PC-9 (cell line): ENCODE measurements at regions of chr6 and their contacts with region 1.

Region 1: DNA sequence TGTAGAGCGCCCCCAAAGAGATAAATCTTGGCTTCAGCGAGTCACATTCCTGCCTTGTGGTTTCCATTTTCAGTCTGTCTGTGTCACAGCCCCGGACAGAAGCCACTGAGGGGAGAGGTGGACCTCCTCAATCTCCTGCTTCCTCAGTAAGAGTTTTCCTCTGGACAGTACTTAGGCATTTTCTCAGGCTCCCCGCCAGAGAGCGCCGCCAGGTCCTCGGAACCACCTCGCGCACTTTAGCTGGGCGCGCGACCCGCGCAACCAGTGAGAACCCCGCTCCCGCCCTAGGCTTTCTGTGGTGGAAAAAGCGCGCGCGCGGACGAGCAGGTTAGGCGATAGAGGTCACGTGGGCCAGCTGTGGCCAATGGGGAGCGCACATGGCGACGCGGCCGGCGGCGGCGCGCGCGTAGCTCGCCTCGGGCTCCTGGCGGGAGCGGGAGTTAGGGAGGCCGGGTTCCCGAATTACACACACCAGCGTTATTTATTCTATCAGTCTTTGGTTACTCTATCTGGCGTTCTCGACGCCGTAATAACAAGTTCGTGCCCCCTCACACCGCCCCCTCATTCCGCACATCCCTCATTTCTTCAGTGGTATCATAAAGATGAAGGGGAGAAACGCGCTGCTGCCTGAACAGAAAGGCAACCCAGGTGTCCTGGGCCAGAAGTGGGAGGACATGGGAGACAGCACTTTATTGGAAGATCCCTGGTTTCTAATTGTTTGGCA is 19.4 kb downstream of the PXT1 start:
- DNase-seq: peak; percentile 94 to 98
- H3K4me3 ChIP-seq: peak overlapping the region; percentile 75
- H3K27ac ChIP-seq: peak overlapping the region; percentile 81
- H3K4me1 ChIP-seq: peaks cover 45% of the 10 kb centered on the region
- H3K27me3 ChIP-seq: no peaks in the 10 kb centered on the region
- CTCF ChIP-seq: peak; percentile 65

Region 2: DNA sequence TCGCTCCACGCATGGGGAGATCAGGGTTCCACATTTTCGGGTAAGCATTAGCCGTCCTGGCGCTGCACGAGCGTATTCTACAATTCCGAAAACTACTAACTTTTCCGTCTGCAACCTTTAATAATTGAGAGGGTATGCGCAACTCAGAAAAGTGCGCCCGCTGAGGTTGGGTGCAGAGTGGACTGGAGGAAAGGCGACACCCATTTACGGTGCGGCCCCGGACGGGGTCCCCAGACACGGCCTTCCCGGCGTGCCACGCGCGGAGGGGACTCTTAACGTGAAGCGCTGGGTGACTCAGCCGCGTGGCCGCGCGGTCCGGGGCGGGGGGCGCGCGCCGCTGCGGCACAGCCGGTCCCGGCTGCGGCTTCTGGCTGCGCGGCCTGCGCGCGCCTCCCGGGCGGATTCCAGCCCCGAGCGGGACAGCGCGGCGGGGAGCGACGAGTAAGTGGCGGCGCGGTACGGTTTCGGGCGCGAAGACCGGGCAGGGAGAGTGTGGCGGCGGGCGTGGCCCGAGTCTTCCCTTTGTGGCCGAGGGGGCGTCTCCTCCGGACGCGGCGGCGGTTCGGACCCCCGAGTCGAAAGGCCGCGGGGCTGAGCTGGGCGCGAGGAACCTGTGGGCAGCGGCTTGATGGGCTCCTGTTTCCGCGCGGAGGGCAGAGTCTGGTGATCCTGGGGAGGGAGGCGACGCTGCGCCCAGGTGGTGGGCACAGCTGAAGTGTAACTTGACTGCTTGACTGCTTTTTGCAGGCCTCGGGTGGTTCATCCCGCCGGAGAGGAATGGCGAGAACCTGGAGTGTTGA is 19.6 kb after region 1 on chr6 and contains the starts of genes KCTD20 and PXT1:
- CTCF ChIA-PET with region 1: no interaction called
- POLR2A ChIA-PET with region 1: interaction called, 8 read pairs
- intact Hi-C with region 1: loop called (anchors 1 kb)
- DNase-seq: peak; percentile 67 to 88
- H3K4me3 ChIP-seq: peak within 1 kb of the TSS; percentile 75
- H3K27ac ChIP-seq: peak within 1 kb of the TSS; percentile 92
- H3K4me1 ChIP-seq: peaks cover 25% of the 10 kb centered on the region
- H3K27me3 ChIP-seq: no peaks in the 10 kb centered on the region
- CTCF ChIP-seq: no peak
- total RNA-seq, gene KCTD20: 34.2 and 42.5 TPM in 2 replicates
- total RNA-seq, gene PXT1: not detected in 2 replicates

Region 3: GRCh38 chr6:36493859-36494258 is 70.6 kb after region 1 on chr6:
- CTCF ChIA-PET with region 1: no interaction called
- POLR2A ChIA-PET with region 1: no interaction called
- intact Hi-C with region 1: loop called (anchors 5 kb)
- DNase-seq: peak in 1 of 2 experiments; percentile 83
- H3K4me3 ChIP-seq: no peak overlapping the region
- H3K27ac ChIP-seq: peak overlapping the region; percentile 20
- H3K4me1 ChIP-seq: peaks cover 18% of the 10 kb centered on the region
- H3K27me3 ChIP-seq: no peaks in the 10 kb centered on the region
- CTCF ChIP-seq: no peak

Region 4: DNA sequence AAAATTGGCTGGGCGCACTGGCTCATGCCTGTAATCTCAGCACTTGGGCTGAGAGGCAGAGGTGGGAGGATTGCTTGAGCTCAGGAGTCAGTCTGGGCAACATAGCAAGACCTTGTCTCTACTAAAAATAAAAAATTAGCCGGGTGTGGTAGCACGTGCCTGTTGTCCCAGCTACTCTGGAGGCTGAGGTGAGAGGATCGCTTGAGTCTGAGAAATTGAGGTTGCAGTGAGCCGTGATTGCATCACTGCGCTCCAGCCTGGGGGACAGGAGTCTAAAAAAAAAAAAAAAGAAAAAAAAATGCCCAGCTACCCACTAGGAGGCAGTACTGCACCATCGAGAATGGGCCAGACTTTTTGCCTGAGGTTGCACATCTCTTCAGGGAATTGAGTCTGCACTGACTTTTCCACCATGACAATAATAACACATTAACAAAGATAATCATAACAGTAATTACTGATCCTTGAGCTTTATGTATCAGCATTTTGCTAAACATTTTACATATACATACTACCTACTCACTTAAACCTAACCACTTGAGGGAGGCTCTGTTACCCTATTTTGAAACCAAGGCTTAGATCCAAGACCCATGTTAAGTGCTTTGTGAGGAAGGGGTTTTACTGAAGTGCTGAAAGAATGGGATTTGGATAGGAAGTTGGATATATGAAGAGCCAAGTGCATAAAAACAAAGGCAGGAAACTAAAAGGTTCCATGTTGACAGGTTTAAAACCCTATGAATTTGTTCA is 191.9 kb after region 1 on chr6:
- CTCF ChIA-PET with region 1: no interaction called
- POLR2A ChIA-PET with region 1: no interaction called
- intact Hi-C with region 1: loop called (anchors 5 kb)
- DNase-seq: peak; percentile 43 to 63
- H3K4me3 ChIP-seq: no peak overlapping the region
- H3K27ac ChIP-seq: no peak overlapping the region
- H3K4me1 ChIP-seq: peaks cover 24% of the 10 kb centered on the region
- H3K27me3 ChIP-seq: no peaks in the 10 kb centered on the region
- CTCF ChIP-seq: peak; percentile 83